CD8-positive, alpha-beta T cell (primary cell): ENCODE measurements at regions of chr17 and their contacts with region 1.

Region 1: GRCh38 chr17:54172096-54172984 is 349.6 kb downstream of the KIF2B start:
- DNase-seq: no peak
- ATAC-seq: no peak
- H3K4me3 ChIP-seq: no peak overlapping the region
- H3K4me3 Mint-ChIP-seq: no peak overlapping the region
- H3K27ac ChIP-seq: no peak overlapping the region
- H3K27ac Mint-ChIP-seq: no peak overlapping the region
- H3K4me1 ChIP-seq: no peaks in the 10 kb centered on the region
- H3K4me1 Mint-ChIP-seq: no peaks in the 10 kb centered on the region
- H3K27me3 ChIP-seq: no peaks in the 10 kb centered on the region
- H3K27me3 Mint-ChIP-seq: no peaks in the 10 kb centered on the region
- CTCF ChIP-seq: no peak

Region 2: GRCh38 chr17:54085934-54086333 is 86.4 kb before region 1 on chr17:
- CTCF ChIA-PET with region 1: no interaction called
- POLR2A ChIA-PET with region 1: no interaction called
- intact Hi-C with region 1: no loop called
- DNase-seq: no peak
- ATAC-seq: no peak
- H3K4me3 ChIP-seq: no peak overlapping the region
- H3K4me3 Mint-ChIP-seq: no peak overlapping the region
- H3K27ac ChIP-seq: no peak overlapping the region
- H3K27ac Mint-ChIP-seq: no peak overlapping the region
- H3K4me1 ChIP-seq: no peaks in the 10 kb centered on the region
- H3K4me1 Mint-ChIP-seq: no peaks in the 10 kb centered on the region
- H3K27me3 ChIP-seq: no peaks in the 10 kb centered on the region
- H3K27me3 Mint-ChIP-seq: no peaks in the 10 kb centered on the region
- CTCF ChIP-seq: no peak

Region 3: DNA sequence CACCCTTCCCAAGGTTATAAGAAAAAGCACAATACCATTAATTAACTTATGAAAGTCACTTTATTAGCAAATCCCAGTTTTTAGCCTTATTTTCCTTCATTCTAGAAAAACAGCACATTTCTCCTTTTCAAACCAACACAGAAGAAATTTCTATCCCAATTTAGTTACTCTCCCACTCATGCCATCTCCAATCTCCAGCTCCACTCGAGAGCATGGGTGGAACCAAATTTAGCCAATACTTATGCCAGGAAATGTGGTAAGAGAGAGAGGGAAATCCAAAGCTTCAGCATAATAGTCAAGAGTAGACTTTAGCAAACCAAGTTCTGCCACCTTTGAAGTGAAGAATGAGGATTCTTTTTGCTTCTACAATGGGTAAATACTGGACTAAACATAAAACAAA is 60.8 kb before region 1 on chr17:
- CTCF ChIA-PET with region 1: no interaction called
- POLR2A ChIA-PET with region 1: no interaction called
- intact Hi-C with region 1: loop called in 1 of 2 experiments (anchors 10 kb)
- DNase-seq: no peak
- ATAC-seq: no peak
- H3K4me3 ChIP-seq: no peak overlapping the region
- H3K4me3 Mint-ChIP-seq: no peak overlapping the region
- H3K27ac ChIP-seq: no peak overlapping the region
- H3K27ac Mint-ChIP-seq: no peak overlapping the region
- H3K4me1 ChIP-seq: no peaks in the 10 kb centered on the region
- H3K4me1 Mint-ChIP-seq: no peaks in the 10 kb centered on the region
- H3K27me3 ChIP-seq: no peaks in the 10 kb centered on the region
- H3K27me3 Mint-ChIP-seq: no peaks in the 10 kb centered on the region
- CTCF ChIP-seq: no peak